Right ventricle myocardium superior (tissue), 1 donor: ENCODE measurements at regions of chr17 and their contacts with region 1.

Region 1: DNA sequence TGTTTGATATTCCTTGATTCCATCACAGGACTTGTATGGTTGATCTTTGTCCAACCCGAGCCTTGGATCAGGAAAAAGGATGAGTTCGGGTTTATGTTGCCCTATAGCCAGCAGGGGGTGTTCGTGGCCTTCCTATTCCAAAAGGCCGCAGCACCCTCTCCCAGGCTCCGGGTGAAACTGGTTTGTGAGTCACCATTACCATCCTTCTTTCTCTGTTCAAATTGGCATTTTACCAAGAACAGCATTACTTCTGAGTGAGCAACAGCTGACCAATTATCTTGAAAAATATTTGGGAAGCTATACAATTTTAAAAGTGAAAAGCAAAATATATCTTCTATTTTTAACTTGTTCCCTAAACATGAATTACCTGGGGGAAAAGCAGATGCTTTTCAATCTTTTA is 24.3 kb upstream of the KRT20 start:
- DNase-seq: peak; percentile 76
- ATAC-seq: peak; percentile 92

Region 2: DNA sequence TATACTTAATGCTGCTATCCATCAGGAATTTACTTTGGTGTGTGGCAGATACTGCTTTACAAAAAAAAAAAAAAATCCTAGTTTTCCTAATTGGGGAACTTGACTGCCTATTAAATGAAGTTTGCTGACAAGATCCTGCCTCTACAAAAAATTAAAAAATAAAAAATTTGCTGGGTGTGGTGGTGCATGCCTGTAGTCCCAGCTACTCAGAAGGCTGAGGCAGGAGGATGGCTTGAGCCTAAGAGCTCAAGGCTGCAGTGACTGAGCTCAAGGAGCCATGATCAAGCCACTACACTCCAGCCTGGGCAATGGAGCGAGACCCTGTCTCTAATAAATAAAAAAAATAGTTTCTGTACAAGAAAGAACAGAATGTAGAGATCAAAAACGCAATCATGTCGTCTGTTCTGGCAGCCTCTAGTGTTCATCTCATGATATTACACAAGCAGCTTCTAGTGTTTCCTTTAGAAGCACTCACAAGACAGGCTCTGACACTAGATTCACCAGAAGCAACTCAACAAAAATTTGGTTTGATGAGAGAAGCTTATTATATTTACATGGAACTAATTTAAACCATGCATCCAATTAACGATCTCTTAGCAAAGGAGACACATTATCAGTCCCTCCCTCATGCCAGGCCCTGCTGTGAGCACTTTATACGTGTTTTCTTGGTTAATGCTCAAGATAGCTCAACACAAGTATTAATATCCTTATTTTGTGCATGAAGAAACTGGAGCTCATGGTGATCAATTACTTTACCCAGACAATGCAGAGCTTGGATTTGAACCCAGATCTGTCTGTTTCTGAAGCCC is 412.9 kb after region 1 on chr17:
- intact Hi-C with region 1: loop called (anchors 10 kb)
- DNase-seq: no peak
- ATAC-seq: no peak

Region 3: GRCh38 chr17:41655611-41656351 is 746.4 kb after region 1 on chr17:
- intact Hi-C with region 1: loop called (anchors 5 kb)
- DNase-seq: peak; percentile 33
- ATAC-seq: no peak